ENCODE measurements at regions of chr19 and their contacts with region 1.

Region 1: DNA sequence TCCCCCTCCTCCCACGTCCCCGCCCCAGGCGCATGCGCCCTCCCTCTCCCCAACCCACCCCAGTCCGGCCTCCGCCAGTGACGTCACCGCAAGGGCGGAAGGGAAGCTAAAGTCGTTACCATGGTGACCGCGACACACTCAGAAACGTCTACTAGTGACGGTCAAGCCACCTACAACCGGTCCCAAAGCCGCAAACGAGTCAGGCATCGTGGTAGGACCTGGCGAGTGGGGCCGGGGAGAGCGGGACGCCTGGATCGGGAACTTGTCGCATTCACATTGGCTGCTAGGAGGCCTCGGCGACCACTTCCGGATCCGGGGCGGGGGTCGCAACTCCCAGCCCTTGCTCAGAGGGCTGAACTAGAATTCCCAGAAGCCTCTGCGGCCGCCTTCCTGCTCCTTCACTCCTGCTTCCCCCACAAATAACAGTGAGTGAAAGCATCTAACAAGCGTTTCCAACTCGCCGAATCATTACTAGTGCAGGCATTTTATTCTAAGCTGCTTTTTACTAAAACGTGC is at the start of gene ZSCAN5A:
- DNase-seq: peak; percentile 99
- ATAC-seq: peak; percentile 80
- H3K4me3 Mint-ChIP-seq: peak within 1 kb of the TSS; percentile 83
- H3K27ac Mint-ChIP-seq: peak within 1 kb of the TSS; percentile 100
- H3K4me1 Mint-ChIP-seq: peaks cover 23% of the 10 kb centered on the region
- H3K27me3 Mint-ChIP-seq: no peaks in the 10 kb centered on the region
- total RNA-seq, gene ZSCAN5A: 8.3 to 9.9 TPM

Region 2: GRCh38 chr19:55080968-55081772 is 1233.5 kb before region 1 on chr19:
- CTCF ChIA-PET with region 1: no interaction called
- POLR2A ChIA-PET with region 1: no interaction called
- intact Hi-C with region 1: loop called in 1 of 2 experiments (anchors 2 kb)
- DNase-seq: peak; percentile 95
- ATAC-seq: peak; percentile 71
- H3K4me3 Mint-ChIP-seq: peak overlapping the region; percentile 69
- H3K27ac Mint-ChIP-seq: peak overlapping the region; percentile 31
- H3K4me1 Mint-ChIP-seq: peaks cover 22% of the 10 kb centered on the region
- H3K27me3 Mint-ChIP-seq: peaks cover 56% of the 10 kb centered on the region

Region 3: DNA sequence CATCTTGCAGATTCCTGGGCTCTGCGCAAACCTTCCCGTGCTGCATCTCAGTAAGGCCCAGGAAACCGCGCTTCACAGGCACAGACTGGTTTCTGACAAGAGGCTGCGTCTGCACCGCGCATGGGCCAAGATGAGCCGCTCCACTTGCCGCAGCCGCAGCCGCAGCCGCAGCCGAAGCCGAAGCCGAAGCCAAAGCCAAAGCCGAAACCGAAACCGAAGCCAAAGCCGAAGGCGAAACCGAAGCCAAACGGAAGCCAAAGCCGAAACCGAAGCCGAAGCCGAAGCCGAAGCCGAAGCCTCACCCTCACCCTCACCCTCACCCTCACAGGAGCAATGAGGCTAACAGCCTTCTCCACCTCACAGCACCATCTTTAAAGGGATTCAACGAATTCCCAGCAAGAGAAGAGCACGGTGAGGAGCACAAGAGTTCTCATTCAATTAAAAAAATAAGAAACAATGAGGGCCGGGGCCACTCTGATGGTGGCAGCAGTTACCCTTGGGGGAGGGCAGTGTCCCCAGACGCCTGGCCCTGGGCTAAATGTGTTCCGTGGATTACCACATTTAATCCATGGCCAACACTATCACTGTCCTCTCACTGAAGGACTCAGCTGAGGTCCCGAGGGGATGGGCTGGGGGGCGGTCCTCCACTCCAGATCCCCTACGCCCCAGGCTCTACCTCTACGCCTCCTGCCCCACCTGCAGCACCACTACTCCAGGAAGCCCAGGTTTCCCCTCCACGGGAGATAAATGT is 222.7 kb before region 1 on chr19:
- CTCF ChIA-PET with region 1: no interaction called
- POLR2A ChIA-PET with region 1: no interaction called
- intact Hi-C with region 1: no loop called
- DNase-seq: no peak
- ATAC-seq: no peak
- H3K4me3 Mint-ChIP-seq: no peak overlapping the region
- H3K27ac Mint-ChIP-seq: no peak overlapping the region
- H3K4me1 Mint-ChIP-seq: no peaks in the 10 kb centered on the region
- H3K27me3 Mint-ChIP-seq: no peaks in the 10 kb centered on the region

Region 4: GRCh38 chr19:56121180-56122167 is 193.1 kb before region 1 on chr19 and contains the start of gene ZNF787:
- CTCF ChIA-PET with region 1: interaction called, 3 read pairs
- POLR2A ChIA-PET with region 1: no interaction called
- intact Hi-C with region 1: loop called in 1 of 2 experiments (anchors 1 kb)
- DNase-seq: peak; percentile 98
- ATAC-seq: peak; percentile 92
- H3K4me3 Mint-ChIP-seq: peak within 1 kb of the TSS; percentile 82
- H3K27ac Mint-ChIP-seq: peak within 1 kb of the TSS; percentile 91
- H3K4me1 Mint-ChIP-seq: peaks cover 48% of the 10 kb centered on the region
- H3K27me3 Mint-ChIP-seq: no peaks in the 10 kb centered on the region
- total RNA-seq, gene ZNF787: 27.6 to 28.4 TPM

Region 5: GRCh38 chr19:56393119-56394012 is 78.7 kb after region 1 on chr19 and contains the start of gene ZNF582:
- CTCF ChIA-PET with region 1: no interaction called
- POLR2A ChIA-PET with region 1: no interaction called
- intact Hi-C with region 1: loop called (anchors 1 to 2 kb)
- DNase-seq: peak; percentile 97
- ATAC-seq: peak; percentile 99
- H3K4me3 Mint-ChIP-seq: peak within 1 kb of the TSS; percentile 84
- H3K27ac Mint-ChIP-seq: peak within 1 kb of the TSS; percentile 96
- H3K4me1 Mint-ChIP-seq: peaks cover 11% of the 10 kb centered on the region
- H3K27me3 Mint-ChIP-seq: no peaks in the 10 kb centered on the region
- total RNA-seq, gene ZNF582: 0.98 to 1.8 TPM

Region 6: DNA sequence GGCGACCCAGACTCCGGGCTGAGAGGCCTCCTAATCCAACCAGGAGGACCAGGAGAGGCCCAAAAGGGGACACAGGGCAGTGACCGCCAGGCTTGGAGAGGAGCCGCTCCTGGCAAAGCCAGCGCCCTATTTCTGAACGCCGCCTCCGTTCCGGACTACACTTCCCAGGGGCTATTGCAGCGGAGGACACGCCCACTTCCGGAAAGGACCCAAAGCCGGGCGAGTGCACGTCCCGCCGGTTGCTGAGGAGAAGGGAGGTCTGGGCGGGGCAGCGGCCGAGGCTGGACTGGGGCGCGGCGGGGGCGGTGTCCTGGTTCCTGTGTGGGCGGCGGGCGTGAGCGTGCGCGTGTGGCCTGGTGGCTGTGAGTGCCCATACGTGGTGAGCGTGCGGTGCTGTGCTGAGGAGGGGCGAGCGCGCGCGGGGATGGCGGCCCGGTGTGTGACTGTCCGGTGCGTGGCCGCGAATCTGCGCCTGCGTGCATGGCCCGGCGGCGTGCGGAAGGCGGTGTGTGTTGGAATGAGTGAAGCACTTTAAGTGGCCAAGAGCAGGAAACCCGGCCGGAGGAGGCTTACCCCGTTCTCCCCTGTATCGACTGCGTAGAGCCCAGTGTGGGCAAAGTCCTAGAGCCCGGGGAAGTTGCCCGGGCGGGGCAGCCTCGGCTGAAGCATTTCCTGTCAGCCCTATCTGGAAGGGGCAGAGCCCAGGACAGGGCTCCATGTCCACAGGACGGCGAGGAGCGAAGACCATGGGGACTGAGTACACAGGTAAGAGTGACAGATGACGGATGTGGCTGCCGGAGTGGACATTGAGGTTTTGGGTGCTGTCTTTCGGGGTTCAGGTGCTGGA is 252.9 kb after region 1 on chr19 and contains the start of gene ZNF470:
- CTCF ChIA-PET with region 1: no interaction called
- POLR2A ChIA-PET with region 1: no interaction called
- intact Hi-C with region 1: loop called in 1 of 2 experiments (anchors 1 kb)
- DNase-seq: peak; percentile 94
- ATAC-seq: peak; percentile 97
- H3K4me3 Mint-ChIP-seq: peak within 1 kb of the TSS; percentile 88
- H3K27ac Mint-ChIP-seq: peak within 1 kb of the TSS; percentile 92
- H3K4me1 Mint-ChIP-seq: peaks cover 16% of the 10 kb centered on the region
- H3K27me3 Mint-ChIP-seq: no peaks in the 10 kb centered on the region
- total RNA-seq, gene ZNF470: 5.0 to 5.6 TPM

Region 7: DNA sequence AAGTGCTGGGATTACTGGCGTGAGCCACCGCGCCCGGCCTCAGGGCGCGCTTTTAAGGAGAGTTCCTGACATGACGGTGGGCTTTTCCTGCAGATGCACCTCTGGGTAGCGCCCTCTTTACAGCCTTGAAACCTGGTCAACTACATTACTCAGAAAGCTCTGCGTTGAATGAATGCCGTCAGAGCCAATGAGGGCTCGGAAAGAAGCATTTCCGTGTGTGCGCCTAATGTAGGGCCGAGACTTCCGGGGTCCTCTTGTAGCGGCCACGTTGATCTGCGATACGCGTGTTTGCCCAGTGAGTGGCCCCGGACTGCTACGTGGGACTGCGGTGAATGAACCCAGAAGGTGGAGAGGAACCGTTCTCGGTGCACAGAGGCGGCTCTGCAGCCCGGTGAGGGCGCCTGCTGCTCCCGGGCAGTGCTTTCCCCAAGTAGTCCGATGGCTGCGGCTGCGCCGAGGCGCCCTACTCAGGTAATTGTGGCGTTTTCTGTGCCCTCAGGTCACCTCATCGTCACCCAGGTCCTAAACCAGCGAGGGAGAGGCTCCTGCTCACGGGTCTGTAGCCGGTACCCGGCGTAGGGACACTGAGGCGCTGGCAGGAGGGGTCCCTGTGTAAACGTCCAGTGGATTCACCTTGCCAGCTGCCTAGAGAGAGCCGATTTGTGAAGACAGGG is 1505.0 kb after region 1 on chr19:
- CTCF ChIA-PET with region 1: no interaction called
- POLR2A ChIA-PET with region 1: no interaction called
- intact Hi-C with region 1: loop called in 1 of 2 experiments (anchors 10 kb)
- DNase-seq: peak; percentile 89
- ATAC-seq: peak; percentile 90
- H3K4me3 Mint-ChIP-seq: peak overlapping the region; percentile 97
- H3K27ac Mint-ChIP-seq: peak overlapping the region; percentile 94
- H3K4me1 Mint-ChIP-seq: peaks cover 51% of the 10 kb centered on the region
- H3K27me3 Mint-ChIP-seq: no peaks in the 10 kb centered on the region